ENCODE measurements at regions of chr4 and their contacts with region 1.

Region 1: DNA sequence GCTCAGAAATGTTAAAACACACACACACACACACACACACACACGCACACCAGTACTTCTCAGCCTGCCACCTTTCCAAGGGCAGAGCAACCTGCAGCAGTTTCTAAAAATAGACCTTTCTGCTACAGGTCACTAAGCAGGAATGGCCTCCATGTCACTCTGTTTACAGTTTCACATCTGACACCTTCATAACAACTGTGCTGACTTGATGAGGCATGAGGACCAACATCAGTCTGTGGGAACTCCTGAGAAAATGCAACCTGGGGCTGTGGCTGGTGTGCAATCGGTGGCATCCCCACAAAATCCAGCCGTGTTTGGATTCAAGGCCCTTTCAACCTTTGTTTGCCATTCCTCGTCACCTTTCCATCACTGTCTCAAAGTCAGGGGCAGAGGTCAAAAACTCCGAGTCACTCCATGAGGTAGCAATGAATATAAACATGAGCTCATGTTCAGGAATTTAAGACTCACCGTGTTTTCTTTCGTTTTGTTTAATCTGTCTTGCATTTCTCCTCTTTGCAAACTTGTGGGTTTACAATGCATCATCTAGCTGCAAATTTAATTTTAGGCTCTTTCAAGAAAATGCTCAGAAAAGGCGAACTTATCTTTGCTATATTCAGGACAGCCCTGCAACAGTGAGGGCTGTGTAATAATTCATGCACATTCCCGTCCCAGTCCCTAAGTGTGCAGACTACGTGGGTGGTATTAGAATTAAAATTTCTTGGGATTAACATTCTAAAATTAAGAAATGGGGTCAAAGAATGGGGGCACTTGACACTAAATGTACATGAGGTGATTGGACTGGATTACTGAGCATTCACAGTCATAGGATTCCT is 135.3 kb downstream of the SHROOM3 start:
- DNase-seq: no peak
- ATAC-seq: peak; percentile 35

Region 2: GRCh38 chr4:76213415-76214176 is 356.8 kb before region 1 on chr4 and contains the start of gene SCARB2:
- intact Hi-C with region 1: no loop called
- DNase-seq: peak; percentile 95
- ATAC-seq: peak; percentile 97
- total RNA-seq, gene SCARB2: 102 TPM

Region 3: GRCh38 chr4:76526585-76526990 is 43.8 kb before region 1 on chr4:
- intact Hi-C with region 1: loop called (anchors 5 kb)
- DNase-seq: no peak
- ATAC-seq: peak; percentile 93

Region 4: DNA sequence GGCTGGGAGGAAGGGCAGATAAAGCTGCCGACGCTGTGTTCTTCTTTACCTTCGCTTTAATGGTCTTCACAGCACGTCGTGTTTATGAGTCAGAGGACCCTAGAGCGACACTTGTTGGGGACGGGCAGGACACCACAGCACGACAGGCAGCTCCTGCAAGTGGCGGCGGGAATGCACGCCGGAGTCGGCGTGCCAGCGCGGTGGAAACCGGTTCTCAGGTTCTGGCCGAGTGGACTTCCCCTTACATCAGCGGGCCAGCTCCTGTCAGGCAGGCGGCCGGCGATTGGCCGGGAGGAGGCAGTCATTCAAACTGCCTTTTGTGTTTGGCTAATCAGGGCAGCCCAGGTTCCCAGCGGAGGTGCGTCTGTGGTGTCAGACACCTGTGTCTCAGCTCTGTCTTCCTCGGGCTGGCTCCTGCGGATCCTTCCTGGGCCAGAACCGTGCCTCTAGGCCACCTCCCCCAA is 15.6 kb after region 1 on chr4:
- intact Hi-C with region 1: no loop called
- DNase-seq: peak; percentile 84
- ATAC-seq: peak; percentile 83

Region 5: GRCh38 chr4:76738086-76738931 is 168.0 kb after region 1 on chr4:
- intact Hi-C with region 1: no loop called
- DNase-seq: no peak
- ATAC-seq: peak; percentile 63